Left ventricle myocardium inferior (tissue), 1 donor: ENCODE measurements at regions of chr22 and their contacts with region 1.

Region 1: GRCh38 chr22:24969560-24970301 is 17.2 kb downstream of the KIAA1671 start:
- DNase-seq: peak; percentile 64
- H3K4me3 ChIP-seq: peak overlapping the region; percentile 17
- H3K27ac ChIP-seq: peak overlapping the region; percentile 90
- H3K4me1 ChIP-seq: peaks cover 82% of the 10 kb centered on the region
- H3K27me3 ChIP-seq: no peaks in the 10 kb centered on the region
- CTCF ChIP-seq: no peak

Region 2: GRCh38 chr22:24566899-24567511 is 402.7 kb before region 1 on chr22:
- intact Hi-C with region 1: no loop called
- DNase-seq: no peak
- H3K4me3 ChIP-seq: no peak overlapping the region
- H3K27ac ChIP-seq: peak overlapping the region; percentile 89
- H3K4me1 ChIP-seq: peaks cover 61% of the 10 kb centered on the region
- H3K27me3 ChIP-seq: no peaks in the 10 kb centered on the region
- CTCF ChIP-seq: no peak

Region 3: DNA sequence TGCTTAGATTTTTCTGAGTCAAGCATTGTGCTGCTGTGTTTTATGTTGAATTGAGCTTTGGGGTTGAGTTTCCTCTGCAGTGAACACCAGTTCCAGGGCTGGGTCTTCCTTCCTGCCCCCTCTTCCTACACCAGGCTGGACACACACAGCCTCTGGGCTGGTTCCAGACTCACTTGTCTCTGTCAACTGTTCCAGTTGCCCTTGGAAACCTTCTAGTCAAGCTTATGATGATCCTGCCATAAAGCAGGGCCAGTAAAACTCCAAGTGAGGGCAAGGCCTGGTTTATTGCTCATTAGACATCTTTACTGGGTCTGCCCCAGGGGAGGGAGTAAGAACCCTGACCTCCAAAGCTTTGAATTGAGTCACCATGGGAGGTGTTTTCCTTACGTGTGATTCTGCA is 43.9 kb after region 1 on chr22:
- intact Hi-C with region 1: loop called (anchors 5 kb)
- DNase-seq: peak; percentile 37
- H3K4me3 ChIP-seq: no peak overlapping the region
- H3K27ac ChIP-seq: peak overlapping the region; percentile 77
- H3K4me1 ChIP-seq: peaks cover 70% of the 10 kb centered on the region
- H3K27me3 ChIP-seq: no peaks in the 10 kb centered on the region
- CTCF ChIP-seq: no peak